Activated CD8-positive, alpha-beta memory T cell treated with anti-CD3 and anti-CD28 coated beads, Interleukin-2, amount 10 ng/mL, durations not matched to agents 7 days and 5 days (primary cell): ENCODE measurements at regions of chr6 and their contacts with region 1.

Region 1: DNA sequence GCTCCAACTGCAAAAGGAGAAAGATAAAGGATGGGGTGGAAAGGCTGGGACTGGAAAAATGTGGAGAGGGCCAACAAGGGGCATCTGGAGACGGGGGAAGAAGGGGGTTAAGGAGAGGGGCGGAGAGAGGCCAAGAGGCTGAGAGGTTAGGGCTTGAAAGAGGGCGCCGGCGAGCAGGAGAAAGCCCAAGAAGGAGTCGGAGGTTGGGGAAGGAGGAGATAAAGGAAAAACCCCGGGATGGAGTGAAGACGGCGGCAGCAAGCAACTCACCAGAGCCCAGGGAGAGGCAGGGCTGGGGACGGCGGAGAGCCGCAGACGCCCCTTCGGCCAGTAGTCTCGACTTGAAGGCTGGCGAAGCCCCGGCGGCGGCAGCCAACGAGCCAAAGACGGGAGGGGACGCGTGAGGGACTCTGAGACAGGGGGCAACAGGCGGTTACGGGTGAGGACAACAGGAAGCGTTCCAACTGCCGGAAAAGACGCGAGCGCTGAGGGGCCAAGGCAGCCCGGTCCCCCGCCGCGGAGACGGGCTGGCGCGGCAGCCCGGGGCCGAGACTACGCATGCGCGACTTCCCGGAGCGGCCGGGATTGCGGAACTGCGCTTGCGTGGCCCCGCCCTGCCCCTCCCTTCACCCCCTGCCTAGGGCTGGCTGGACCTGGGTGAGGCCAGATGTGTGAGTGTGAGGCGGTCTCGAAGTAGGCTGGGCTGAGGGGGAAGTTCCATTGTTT is at the start of gene STK38:
- DNase-seq: peak; percentile 96
- ATAC-seq: peak; percentile 93
- H3K4me3 Mint-ChIP-seq: peak within 1 kb of the TSS; percentile 99
- H3K27ac Mint-ChIP-seq: peak within 1 kb of the TSS; percentile 93
- H3K4me1 Mint-ChIP-seq: peaks cover 41% of the 10 kb centered on the region
- H3K27me3 Mint-ChIP-seq: no peaks in the 10 kb centered on the region
- total RNA-seq, gene STK38: 47.7 to 54.7 TPM

Region 2: GRCh38 chr6:36067374-36068011 is 479.6 kb before region 1 on chr6:
- CTCF ChIA-PET with region 1: no interaction called
- DNase-seq: no peak
- ATAC-seq: no peak
- H3K4me3 Mint-ChIP-seq: no peak overlapping the region
- H3K27ac Mint-ChIP-seq: no peak overlapping the region
- H3K4me1 Mint-ChIP-seq: peaks cover 13% of the 10 kb centered on the region
- H3K27me3 Mint-ChIP-seq: no peaks in the 10 kb centered on the region

Region 3: GRCh38 chr6:36594029-36594815 is 47.1 kb after region 1 on chr6 and contains the start of gene SRSF3:
- CTCF ChIA-PET with region 1: interaction called, 27 read pairs
- DNase-seq: peak; percentile 98
- ATAC-seq: peak; percentile 91
- H3K4me3 Mint-ChIP-seq: peak within 1 kb of the TSS; percentile 98
- H3K27ac Mint-ChIP-seq: peak within 1 kb of the TSS; percentile 100
- H3K4me1 Mint-ChIP-seq: peaks cover 41% of the 10 kb centered on the region
- H3K27me3 Mint-ChIP-seq: peaks cover 2% of the 10 kb centered on the region
- total RNA-seq, gene SRSF3: 416 to 514 TPM